Naive thymus-derived CD4-positive, alpha-beta T cell (primary cell): ENCODE measurements at regions of chr14 and their contacts with region 1.

Region 1: GRCh38 chr14:77457522-77458290 is at the starts of genes AHSA1 and VIPAS39:
- DNase-seq: peak; percentile 67 to 98 (median 96)
- ATAC-seq: peak; percentile 98
- H3K4me3 ChIP-seq: peak within 1 kb of the TSS; percentile 100
- H3K4me3 Mint-ChIP-seq: peak within 1 kb of the TSS; percentile 96 to 100 (median 100)
- H3K27ac ChIP-seq: peak within 1 kb of the TSS; percentile 82
- H3K27ac Mint-ChIP-seq: peak within 1 kb of the TSS; percentile 94 to 100 (median 99)
- H3K4me1 ChIP-seq: peaks cover 20 to 26% of the 10 kb centered on the region in 2 donors
- H3K4me1 Mint-ChIP-seq: peaks cover 22 to 67% (median 53%) of the 10 kb centered on the region in 7 donors
- H3K27me3 ChIP-seq: no peaks in the 10 kb centered on the region
- H3K27me3 Mint-ChIP-seq: no peaks in the 10 kb centered on the region
- total RNA-seq, gene AHSA1: 51.6 to 176 (median 103) TPM
- total RNA-seq, gene VIPAS39: 12.1 to 21.2 (median 20.5) TPM

Region 2: GRCh38 chr14:75982266-75983018 is 1475.3 kb before region 1 on chr14:
- CTCF ChIA-PET with region 1: no interaction called
- POLR2A ChIA-PET with region 1: no interaction called
- intact Hi-C with region 1: loop called in 1 of 2 experiments (anchors 1 kb)
- DNase-seq: peak; percentile 69 to 83 (median 80)
- ATAC-seq: peak; percentile 83
- H3K4me3 ChIP-seq: peak overlapping the region; percentile 83
- H3K4me3 Mint-ChIP-seq: peak overlapping the region; percentile 80 to 99 (median 88)
- H3K27ac ChIP-seq: peak overlapping the region; percentile 84
- H3K27ac Mint-ChIP-seq: peak overlapping the region; percentile 58 to 97 (median 90)
- H3K4me1 ChIP-seq: peaks cover 18 to 32% of the 10 kb centered on the region in 2 donors
- H3K4me1 Mint-ChIP-seq: peaks cover 43 to 64% (median 56%) of the 10 kb centered on the region in 7 donors
- H3K27me3 ChIP-seq: no peaks in the 10 kb centered on the region
- H3K27me3 Mint-ChIP-seq: peaks cover 0 to 24% (median 0%) of the 10 kb centered on the region in 5 donors

Region 3: DNA sequence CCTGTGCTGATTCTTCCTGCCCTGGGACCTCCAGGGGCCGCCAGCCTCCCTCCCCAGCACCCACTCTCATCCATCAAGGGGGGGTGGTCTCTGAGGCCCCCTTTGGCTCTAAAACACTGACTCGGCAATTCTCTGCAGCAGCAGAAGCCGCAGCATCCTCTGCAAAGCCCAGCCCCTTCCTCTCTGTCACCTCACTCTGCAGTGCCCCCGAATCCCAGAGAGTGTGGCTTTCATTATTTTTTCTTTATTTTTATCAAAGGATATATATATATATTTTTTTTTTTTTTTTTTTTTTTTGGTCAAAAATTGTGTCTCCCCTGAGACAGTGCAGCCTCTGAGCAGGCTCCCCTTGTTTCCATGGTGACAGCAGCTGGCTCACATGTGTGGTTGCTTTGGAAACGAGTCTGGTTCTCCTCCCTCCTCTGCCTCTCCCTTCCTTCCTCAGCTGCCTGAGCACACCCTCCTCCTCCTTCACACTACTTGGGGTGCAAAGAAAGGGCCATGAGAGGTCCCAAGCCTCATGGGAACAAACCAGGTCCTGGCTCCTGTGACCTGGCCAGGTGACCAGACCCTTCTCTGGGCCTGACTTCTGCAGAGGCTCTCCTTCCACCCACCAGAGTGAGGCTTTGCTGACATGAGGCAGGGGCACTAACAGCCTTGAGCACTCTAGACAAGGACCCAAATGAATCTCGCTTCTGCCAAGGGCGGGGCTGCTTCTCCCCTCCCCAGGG is 531.0 kb before region 1 on chr14:
- CTCF ChIA-PET with region 1: no interaction called
- POLR2A ChIA-PET with region 1: no interaction called
- intact Hi-C with region 1: no loop called
- DNase-seq: peak in 8 of 9 donors; percentile 50 to 90 (median 69)
- ATAC-seq: peak; percentile 73
- H3K4me3 ChIP-seq: peak overlapping the region; percentile 6
- H3K4me3 Mint-ChIP-seq: peak overlapping the region; percentile 65 to 88 (median 80)
- H3K27ac ChIP-seq: peak overlapping the region; percentile 65
- H3K27ac Mint-ChIP-seq: peak overlapping the region; percentile 56 to 96 (median 90)
- H3K4me1 ChIP-seq: peaks cover 52 to 72% of the 10 kb centered on the region in 2 donors
- H3K4me1 Mint-ChIP-seq: peaks cover 50 to 96% (median 86%) of the 10 kb centered on the region in 7 donors
- H3K27me3 ChIP-seq: no peaks in the 10 kb centered on the region
- H3K27me3 Mint-ChIP-seq: no peaks in the 10 kb centered on the region

Region 4: DNA sequence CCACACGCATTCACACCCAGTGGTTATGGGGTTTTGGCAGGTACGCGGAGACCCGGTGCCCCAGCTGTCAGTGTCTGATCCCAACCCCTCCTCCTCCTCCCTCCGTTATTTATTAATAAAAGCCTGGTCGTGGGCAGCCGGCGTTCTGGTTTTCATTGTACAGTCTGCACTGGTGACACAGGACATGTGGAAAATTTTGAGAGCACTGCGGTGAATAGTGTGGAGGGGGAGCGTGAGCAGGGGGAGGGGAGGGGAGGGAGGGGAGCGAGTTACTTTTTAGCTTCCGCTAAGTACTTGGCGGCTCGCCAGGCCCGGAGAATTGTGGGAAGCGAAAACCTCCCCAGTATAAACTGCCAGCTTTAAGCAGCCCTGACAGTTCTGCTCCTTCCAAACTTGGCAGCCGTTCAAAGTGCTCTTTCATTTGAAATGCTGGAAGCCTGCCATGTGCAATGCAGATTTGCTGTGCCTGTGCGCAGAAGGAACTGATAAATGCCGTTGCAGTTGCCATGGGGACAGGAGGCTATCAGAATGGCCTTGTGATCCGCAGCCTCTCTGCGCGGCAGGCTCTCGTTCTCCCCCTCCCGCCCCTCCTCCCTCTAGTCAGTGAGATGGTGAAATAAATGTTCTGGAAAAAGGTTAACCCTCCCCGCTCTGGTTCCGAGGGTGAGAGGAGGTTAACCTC is 417.5 kb before region 1 on chr14:
- CTCF ChIA-PET with region 1: no interaction called
- POLR2A ChIA-PET with region 1: no interaction called
- intact Hi-C with region 1: loop called in 1 of 2 experiments (anchors 5 kb)
- DNase-seq: peak; percentile 86 to 99 (median 99)
- ATAC-seq: peak; percentile 87
- H3K4me3 ChIP-seq: peak overlapping the region; percentile 78
- H3K4me3 Mint-ChIP-seq: peak overlapping the region; percentile 76 to 97 (median 87)
- H3K27ac ChIP-seq: peak overlapping the region; percentile 97
- H3K27ac Mint-ChIP-seq: peak overlapping the region; percentile 97 to 100 (median 99)
- H3K4me1 ChIP-seq: peaks cover 57 to 77% of the 10 kb centered on the region in 2 donors
- H3K4me1 Mint-ChIP-seq: peaks cover 50 to 97% (median 89%) of the 10 kb centered on the region in 7 donors
- H3K27me3 ChIP-seq: no peaks in the 10 kb centered on the region
- H3K27me3 Mint-ChIP-seq: no peaks in the 10 kb centered on the region

Region 5: DNA sequence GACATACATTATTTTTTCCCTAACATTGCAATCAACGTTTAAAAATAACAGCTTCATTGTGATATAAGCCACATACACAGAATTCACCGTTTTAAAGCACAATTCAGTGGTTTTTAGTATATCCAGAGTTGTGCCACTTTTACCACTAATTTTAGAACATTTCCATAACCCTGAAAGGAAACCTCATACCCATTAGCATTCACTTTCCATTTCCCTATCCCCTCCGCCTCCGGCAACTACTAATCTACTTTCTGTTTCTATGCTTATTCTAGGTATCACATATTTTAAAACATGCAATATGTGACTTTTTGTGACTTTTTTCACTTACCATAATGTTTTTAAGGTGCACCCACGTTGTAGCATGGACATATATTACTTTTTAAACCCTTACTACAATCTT is 96.5 kb after region 1 on chr14:
- CTCF ChIA-PET with region 1: no interaction called
- POLR2A ChIA-PET with region 1: no interaction called
- intact Hi-C with region 1: loop called in 1 of 2 experiments (anchors 1 kb)
- DNase-seq: no peak
- ATAC-seq: peak; percentile 40
- H3K4me3 ChIP-seq: no peak overlapping the region
- H3K4me3 Mint-ChIP-seq: peak overlapping the region in 1 of 10 donors; percentile 77
- H3K27ac ChIP-seq: no peak overlapping the region
- H3K27ac Mint-ChIP-seq: peak overlapping the region in 4 of 9 donors; percentile 2 to 89 (median 26)
- H3K4me1 ChIP-seq: no peaks in the 10 kb centered on the region
- H3K4me1 Mint-ChIP-seq: peaks cover 0 to 27% (median 6%) of the 10 kb centered on the region in 7 donors
- H3K27me3 ChIP-seq: no peaks in the 10 kb centered on the region
- H3K27me3 Mint-ChIP-seq: no peaks in the 10 kb centered on the region

Region 6: DNA sequence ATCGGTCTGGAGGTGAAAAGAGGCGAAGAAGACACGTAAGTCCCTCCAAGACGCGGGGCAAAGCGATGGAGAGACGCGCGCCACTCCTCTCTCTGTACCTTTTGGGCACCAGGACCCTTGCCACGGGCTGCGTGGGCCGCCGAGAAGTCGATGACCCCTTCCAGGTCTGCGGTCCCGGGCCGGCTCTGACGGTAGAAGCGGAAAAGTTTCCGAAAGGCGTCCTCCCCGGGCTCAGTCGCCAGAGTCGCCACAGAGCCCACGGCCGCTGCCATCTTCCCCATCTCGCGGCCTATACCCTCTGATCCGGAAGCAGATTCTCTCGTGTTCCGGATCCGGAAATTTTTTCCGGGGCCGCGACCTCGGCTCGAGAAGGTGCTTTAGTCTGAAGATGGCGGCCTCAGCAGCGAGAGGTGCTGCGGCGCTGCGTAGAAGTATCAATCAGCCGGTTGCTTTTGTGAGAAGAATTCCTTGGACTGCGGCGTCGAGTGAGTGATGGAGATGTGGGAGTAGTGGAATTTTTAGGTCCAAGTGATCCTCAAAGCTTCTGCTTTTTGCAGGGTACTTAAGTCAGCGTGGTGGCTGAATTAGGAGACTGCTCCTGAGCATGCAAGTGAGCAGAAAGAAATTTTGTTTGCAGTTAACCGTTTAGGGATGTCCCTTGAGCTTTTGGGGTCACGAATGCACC is 250.2 kb after region 1 on chr14 and contains the starts of genes ALKBH1 and SLIRP:
- CTCF ChIA-PET with region 1: no interaction called
- POLR2A ChIA-PET with region 1: interaction called, 7 read pairs
- intact Hi-C with region 1: loop called (anchors 1 kb)
- DNase-seq: peak; percentile 73 to 91 (median 87)
- ATAC-seq: peak; percentile 98
- H3K4me3 ChIP-seq: peak within 1 kb of the TSS; percentile 88
- H3K4me3 Mint-ChIP-seq: peak within 1 kb of the TSS; percentile 86 to 98 (median 94)
- H3K27ac ChIP-seq: peak within 1 kb of the TSS; percentile 79
- H3K27ac Mint-ChIP-seq: peak within 1 kb of the TSS; percentile 91 to 99 (median 94)
- H3K4me1 ChIP-seq: peaks cover 22 to 24% of the 10 kb centered on the region in 2 donors
- H3K4me1 Mint-ChIP-seq: peaks cover 26 to 58% (median 44%) of the 10 kb centered on the region in 7 donors
- H3K27me3 ChIP-seq: no peaks in the 10 kb centered on the region
- H3K27me3 Mint-ChIP-seq: no peaks in the 10 kb centered on the region
- total RNA-seq, gene ALKBH1: 10.2 to 20.3 (median 14.1) TPM
- total RNA-seq, gene SLIRP: 35.9 to 66.6 (median 45.5) TPM

Region 7: DNA sequence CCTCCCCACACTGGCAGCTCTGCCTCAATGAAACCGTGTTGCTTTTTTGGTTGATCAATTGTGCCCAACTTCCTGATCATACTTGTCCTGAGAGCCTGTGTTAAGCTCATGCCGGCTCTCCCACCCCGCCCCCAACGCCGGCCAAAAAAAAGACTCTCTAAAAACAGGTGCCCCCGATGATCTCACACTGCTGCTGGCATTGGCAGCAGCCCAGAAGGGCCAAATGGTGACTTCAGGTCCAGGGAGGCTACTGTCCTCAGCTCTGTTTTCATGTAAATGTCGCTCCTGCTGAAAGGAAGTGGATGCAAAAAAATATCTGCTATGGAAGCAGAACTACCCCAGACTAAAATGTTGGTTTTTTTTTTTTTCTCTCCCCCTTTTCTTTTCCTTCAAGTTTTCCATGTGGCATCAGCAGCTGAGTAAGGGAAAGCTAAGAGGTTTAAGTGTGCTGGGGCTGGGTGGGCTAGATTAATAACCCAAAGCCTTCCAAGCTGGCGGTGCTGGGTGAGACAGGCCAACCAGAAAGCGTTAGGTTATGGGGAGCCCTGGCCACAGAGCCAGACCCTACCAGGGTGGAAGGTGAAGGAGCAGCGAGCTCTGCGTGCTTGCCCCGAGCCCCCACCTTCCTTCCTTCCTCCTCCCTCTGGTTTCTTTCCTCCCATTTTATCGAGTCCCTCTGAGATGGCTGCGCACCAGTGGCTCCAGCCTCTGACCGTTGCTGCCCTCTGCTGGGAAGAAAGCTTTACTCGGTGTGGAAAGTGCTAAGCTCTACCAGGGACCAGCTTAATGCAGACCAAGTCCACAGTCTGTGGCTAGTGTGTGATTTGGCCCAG is 1108.5 kb after region 1 on chr14:
- CTCF ChIA-PET with region 1: no interaction called
- POLR2A ChIA-PET with region 1: no interaction called
- intact Hi-C with region 1: loop called in 1 of 2 experiments (anchors 10 kb)
- DNase-seq: peak in 8 of 9 donors; percentile 21 to 53 (median 26)
- ATAC-seq: peak; percentile 87
- H3K4me3 ChIP-seq: peak overlapping the region; percentile 26
- H3K4me3 Mint-ChIP-seq: peak overlapping the region in 9 of 10 donors; percentile 27 to 74 (median 53)
- H3K27ac ChIP-seq: no peak overlapping the region
- H3K27ac Mint-ChIP-seq: no peak overlapping the region
- H3K4me1 ChIP-seq: no peaks in the 10 kb centered on the region
- H3K4me1 Mint-ChIP-seq: peaks cover 0 to 11% (median 9%) of the 10 kb centered on the region in 7 donors
- H3K27me3 ChIP-seq: no peaks in the 10 kb centered on the region
- H3K27me3 Mint-ChIP-seq: peaks cover 0 to 4% (median 0%) of the 10 kb centered on the region in 5 donors